ENCODE measurements at regions of chr14 and their contacts with region 1.

Region 1: DNA sequence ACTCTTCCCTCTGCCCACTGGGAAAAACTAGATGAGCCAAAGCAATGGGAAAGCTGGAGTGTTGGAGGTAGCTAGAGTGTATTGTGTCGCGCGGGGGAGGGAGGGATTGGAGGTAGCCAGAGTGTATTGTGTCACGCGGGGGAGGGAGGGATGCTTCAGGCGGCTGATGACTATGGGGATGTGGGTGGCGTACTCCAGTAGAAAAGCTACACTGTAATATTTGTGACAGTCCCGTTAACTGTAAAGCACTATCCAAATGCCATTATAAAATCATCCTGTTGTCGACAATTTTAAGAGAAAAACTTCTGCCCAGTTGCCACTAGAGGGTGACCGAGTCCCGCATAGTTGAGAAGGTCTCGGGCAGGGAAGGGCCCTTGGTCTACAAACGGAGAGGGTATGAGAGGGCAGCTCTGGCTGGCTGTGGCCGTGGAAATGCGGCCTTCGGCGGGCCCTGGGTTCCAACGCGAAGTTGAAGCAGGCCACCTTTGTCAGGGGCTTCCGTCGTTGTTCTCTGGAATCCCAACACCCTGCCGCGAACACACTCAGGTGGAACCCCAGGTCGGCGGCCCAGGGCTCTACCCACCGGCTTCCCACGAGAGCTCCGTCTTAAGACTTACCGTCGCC is 15.1 kb upstream of the PLEK2 start:
- DNase-seq: peak; percentile 83

Region 2: DNA sequence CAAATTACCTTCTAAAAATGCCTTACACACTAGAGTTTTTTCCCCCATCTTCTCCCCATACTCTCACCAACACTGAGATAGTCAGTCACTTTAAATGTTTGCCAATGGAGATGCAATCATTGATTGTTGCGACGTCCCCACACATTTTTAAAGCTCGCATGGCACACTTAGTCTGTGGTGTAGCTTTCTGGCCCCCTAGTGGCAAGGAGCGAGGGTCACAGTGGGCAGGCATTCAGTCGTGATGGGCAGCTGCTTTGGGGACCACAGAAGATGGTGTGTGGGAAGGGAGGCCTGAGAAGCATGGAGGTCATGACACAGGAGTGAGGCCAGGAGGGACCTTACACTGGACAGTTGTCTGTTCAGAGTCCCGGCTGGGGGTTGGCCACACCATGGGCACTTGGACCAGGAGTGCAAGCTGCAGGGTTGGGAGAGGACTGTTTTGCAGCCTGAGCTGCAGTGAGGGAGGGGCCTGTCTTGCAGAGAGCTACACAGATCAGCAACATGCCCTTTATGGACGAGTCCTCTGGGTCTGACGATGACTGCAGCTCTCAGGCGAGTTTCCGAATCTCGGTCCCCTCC is 144.3 kb after region 1 on chr14:
- CTCF ChIA-PET with region 1: interaction called, 42 read pairs
- POLR2A ChIA-PET with region 1: interaction called, 5 read pairs
- DNase-seq: peak; percentile 72

Measured in HEK293T (cell line).